HEK293T (cell line): ENCODE measurements at regions of chr1 and their contacts with region 1.

Region 1: DNA sequence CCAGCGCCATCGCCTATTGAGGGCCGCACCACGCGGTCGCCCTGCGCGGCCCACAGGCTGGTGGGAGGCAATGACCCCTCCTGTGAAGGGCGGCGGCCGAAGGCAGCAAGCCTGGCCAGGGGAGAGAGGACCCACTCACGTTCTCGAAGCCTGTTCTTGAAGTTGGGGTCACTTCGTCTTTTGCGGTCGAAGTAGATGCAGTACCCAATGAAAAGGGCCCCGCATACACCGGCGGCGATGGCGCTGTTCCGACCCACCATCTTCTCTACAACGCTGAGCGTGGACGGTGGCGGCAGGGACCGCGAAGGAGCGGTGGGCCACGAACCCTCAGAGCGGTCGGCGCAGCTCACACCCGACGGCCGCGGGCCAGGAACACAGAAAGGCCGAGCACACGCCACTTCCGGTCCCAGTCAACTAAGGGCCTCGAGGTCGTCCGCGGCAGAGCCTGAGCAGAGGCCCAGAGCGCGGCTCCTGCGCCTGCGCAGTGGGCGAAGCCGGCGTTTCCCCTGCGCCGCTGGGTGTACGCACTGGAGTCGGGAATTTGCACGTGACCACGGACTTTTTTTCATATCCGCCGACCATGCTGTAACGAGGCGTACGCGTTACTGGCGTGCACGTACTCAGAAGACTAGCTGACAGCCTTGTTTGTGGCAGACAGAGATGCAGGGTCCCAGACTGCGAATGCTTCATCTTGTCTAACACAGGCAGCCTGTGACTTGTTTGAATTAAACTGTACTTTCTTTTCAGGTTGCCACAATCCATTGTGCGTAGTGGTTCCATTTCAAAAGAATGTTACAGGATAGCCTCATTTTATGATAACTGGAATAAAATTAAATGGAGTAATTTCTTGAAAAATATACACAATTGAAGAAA is at the start of gene TOMM20:
- DNase-seq: peak; percentile 100

Region 2: DNA sequence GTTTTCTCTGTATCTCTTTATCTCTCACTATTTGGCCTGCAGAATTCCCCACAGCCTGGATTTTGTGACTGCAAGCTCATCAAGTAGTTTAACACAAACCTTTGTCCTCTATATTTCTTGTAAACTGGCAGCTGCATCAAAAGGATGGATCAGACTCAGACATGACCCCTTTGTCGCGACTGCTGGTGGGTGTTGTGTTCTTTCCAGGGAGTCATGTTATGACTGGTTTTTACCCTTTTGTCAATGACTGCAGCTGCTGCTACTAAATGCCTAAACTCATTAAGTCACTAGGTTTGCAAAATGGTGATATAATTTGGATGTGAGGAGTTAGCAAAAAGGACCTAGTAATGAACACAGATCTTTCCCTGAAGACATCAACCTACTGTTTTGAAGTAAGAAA is 10.1 kb after region 1 on chr1:
- CTCF ChIA-PET with region 1: no interaction called
- POLR2A ChIA-PET with region 1: interaction called, 22 read pairs
- DNase-seq: no peak

Region 3: GRCh38 chr1:235168375-235168774 is 39.7 kb after region 1 on chr1:
- CTCF ChIA-PET with region 1: no interaction called
- POLR2A ChIA-PET with region 1: no interaction called
- DNase-seq: no peak

Region 4: GRCh38 chr1:235632506-235633401 is 504.1 kb after region 1 on chr1:
- CTCF ChIA-PET with region 1: interaction called, 13 read pairs
- POLR2A ChIA-PET with region 1: no interaction called
- DNase-seq: no peak